ENCODE measurements at regions of chr11 and their contacts with region 1.

Region 1: GRCh38 chr11:118263695-118264567 is at the start of gene MPZL2:
- DNase-seq: peak in 1 of 2 experiments; percentile 70
- H3K4me3 ChIP-seq: peak within 1 kb of the TSS; percentile 28 to 59 (median 38); a peak in 7 of 8 replicates
- H3K27ac ChIP-seq: no peak within 1 kb of the TSS; the same call in 1 of the 2 replicates
- H3K4me1 ChIP-seq: peaks cover 3 to 11% (median 4%) of the 10 kb centered on the region in 4 experiments; a peak in 4 of 7 replicates
- H3K27me3 ChIP-seq: peaks cover 1 to 42% (median 30%) of the 10 kb centered on the region in 4 experiments
- CTCF ChIP-seq: peak in 1 of 3 experiments; percentile 19; a peak in 1 of 4 replicates
- EP300 ChIP-seq: no peak
- POLR2A ChIP-seq: peak in 1 of 2 experiments; percentile 73; a peak in 2 of 3 replicates
- RAD21 ChIP-seq: no peak
- total RNA-seq, gene MPZL2: 2.4 and 2.6 TPM in 2 replicates

Region 2: GRCh38 chr11:118277306-118277705 is 13.4 kb after region 1 on chr11:
- CTCF ChIA-PET with region 1: interaction called, 15 read pairs
- POLR2A ChIA-PET with region 1: interaction called, 6 read pairs
- DNase-seq: no peak
- H3K4me3 ChIP-seq: no peak overlapping the region
- H3K27ac ChIP-seq: no peak overlapping the region
- H3K4me1 ChIP-seq: no peaks in the 10 kb centered on the region
- H3K27me3 ChIP-seq: no peaks in the 10 kb centered on the region
- CTCF ChIP-seq: no peak
- EP300 ChIP-seq: no peak
- POLR2A ChIP-seq: no peak
- RAD21 ChIP-seq: no peak

Region 3: DNA sequence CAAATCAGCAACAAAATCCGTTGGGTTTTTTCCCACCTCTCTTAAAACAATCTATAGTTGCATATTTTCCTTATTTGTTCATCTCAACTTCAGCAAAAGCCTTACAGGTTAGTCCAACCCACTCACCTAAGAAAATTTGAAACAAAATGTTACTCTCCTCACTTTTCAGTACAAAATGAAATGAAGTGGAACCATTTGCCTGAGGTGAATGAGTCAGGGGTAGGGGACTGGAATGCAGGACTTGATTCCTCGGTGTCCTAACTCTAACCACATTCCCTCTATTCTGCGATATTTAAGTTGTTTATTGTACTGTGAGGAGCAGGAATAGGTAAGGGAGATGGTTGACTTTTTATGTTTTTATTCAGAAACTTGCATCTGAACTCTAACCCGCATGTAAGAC is 153.9 kb after region 1 on chr11:
- CTCF ChIA-PET with region 1: no interaction called
- POLR2A ChIA-PET with region 1: no interaction called
- DNase-seq: no peak
- H3K4me3 ChIP-seq: no peak overlapping the region
- H3K27ac ChIP-seq: no peak overlapping the region
- H3K4me1 ChIP-seq: peaks cover 0 to 4% (median 2%) of the 10 kb centered on the region in 4 experiments; a peak in 3 of 7 replicates
- H3K27me3 ChIP-seq: no peaks in the 10 kb centered on the region
- CTCF ChIP-seq: no peak
- EP300 ChIP-seq: no peak
- POLR2A ChIP-seq: no peak
- RAD21 ChIP-seq: no peak

Measured in H1 (cell line).